Activated CD4-positive, alpha-beta T cell treated with anti-CD3 and anti-CD28 coated beads for 36 hours (primary cell): ENCODE measurements at regions of chr3 and their contacts with region 1.

Region 1: DNA sequence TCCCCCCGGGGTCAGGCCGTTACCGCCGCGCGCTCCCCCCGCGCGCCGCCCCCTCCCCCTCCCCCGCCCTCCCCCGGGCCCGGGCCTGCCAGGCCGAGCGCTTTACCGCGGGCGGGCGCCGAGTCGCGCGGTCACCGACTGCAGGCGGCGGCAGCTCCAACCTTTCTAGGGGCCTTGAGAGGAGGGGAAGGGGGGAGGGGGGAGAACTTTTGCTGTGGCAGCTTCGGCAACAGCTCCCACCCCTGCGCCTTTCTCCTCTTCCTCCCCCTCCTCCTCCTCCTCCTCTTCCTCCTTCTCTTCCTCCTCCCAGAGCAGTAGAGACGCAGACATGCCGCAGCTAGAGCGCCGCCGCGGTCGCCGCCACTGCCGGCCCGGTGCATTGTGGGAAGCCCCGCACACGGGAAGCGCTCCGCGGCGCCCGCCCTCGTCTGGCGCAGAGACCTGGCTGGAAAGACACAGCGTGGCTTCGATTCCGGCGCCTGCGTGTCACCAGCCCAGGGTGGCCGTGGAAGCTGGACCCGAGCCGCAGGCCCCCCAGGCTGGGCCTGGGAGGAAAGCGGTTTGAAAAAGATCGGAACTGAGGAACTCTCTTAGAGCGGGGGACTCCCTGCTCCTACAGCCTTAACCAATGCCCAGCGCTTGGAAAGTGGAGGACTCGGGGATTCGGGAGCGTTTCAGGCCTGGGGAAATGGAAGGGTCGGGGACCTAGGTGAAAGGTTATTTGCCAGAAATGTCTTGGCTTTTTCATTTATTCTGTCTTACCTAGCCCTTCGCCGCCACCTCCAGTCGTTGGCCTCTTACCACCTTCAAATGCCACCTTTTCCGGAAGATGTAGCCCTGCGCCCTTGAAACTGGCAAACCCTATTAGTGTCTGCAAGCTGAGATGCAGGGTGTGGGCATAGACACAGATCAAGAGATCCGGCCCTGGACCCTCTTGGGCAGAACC is at the start of gene ZNF148:
- DNase-seq: peak; percentile 94
- ATAC-seq: peak; percentile 89
- H3K4me3 Mint-ChIP-seq: peak within 1 kb of the TSS; percentile 92
- H3K27ac Mint-ChIP-seq: peak within 1 kb of the TSS; percentile 99
- H3K4me1 Mint-ChIP-seq: peaks cover 36% of the 10 kb centered on the region
- H3K27me3 Mint-ChIP-seq: no peaks in the 10 kb centered on the region
- total RNA-seq, gene ZNF148: 30.3 to 37.7 TPM

Region 2: DNA sequence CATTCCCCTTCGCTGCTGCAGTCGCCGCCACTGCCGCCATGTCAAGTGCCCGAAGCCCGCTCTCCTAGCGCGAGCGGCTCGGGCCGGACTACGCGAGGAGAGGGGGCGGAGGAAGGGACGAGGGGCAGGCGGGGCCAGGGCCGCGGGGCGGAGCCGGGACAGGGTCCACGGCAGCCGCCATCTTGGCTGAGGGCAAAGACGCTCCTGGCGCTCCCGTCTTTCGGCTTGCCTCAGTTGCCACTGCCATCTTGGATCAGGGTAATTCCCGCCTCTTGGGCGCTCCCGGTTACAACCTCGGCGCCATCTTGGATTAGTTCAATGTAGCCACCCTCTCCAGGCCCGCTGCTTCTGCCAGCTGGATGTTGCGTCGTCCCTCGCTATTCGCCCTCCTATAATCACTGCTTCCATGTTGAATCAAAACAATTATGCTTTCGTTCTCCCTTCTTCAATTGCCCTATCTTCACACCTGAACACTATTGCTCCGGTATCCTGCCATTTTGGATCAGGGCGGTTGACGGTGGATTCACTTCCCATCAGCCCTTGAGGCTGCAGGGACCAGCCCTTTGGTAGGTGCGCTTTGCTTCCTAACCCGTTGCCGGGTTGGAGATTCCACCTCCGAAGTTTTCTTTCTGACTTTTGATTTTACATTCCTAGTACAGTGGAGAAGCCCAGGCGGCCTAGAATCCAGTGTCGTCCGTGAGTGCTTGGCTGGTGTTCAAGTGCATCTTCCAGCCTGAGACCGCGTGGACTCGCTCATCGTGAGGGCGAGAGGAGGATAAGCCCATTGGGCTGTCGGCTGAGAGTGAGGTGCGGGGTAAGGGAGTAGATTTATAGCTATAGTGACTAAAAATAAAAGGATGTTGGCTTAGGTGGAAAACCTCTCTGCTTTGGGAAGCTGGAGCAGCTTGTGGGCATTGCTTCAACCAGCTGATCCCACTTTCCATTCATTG is 1790.0 kb before region 1 on chr3 and contains the start of gene HACD2:
- CTCF ChIA-PET with region 1: no interaction called
- POLR2A ChIA-PET with region 1: no interaction called
- intact Hi-C with region 1: loop called in 1 of 2 experiments (anchors 5 kb)
- DNase-seq: peak; percentile 97
- ATAC-seq: peak; percentile 93
- H3K4me3 Mint-ChIP-seq: no peak within 1 kb of the TSS
- H3K27ac Mint-ChIP-seq: peak within 1 kb of the TSS; percentile 87
- H3K4me1 Mint-ChIP-seq: peaks cover 21% of the 10 kb centered on the region
- H3K27me3 Mint-ChIP-seq: no peaks in the 10 kb centered on the region
- total RNA-seq, gene HACD2: 22.1 to 27.7 TPM

Region 3: GRCh38 chr3:125141596-125142419 is 233.5 kb before region 1 on chr3:
- CTCF ChIA-PET with region 1: no interaction called
- POLR2A ChIA-PET with region 1: interaction called, 4 read pairs
- intact Hi-C with region 1: loop called in 1 of 2 experiments (anchors 5 kb)
- DNase-seq: peak; percentile 84
- ATAC-seq: peak; percentile 85
- H3K4me3 Mint-ChIP-seq: peak overlapping the region; percentile 56
- H3K27ac Mint-ChIP-seq: peak overlapping the region; percentile 56
- H3K4me1 Mint-ChIP-seq: peaks cover 28% of the 10 kb centered on the region
- H3K27me3 Mint-ChIP-seq: peaks cover 36% of the 10 kb centered on the region

Region 4: DNA sequence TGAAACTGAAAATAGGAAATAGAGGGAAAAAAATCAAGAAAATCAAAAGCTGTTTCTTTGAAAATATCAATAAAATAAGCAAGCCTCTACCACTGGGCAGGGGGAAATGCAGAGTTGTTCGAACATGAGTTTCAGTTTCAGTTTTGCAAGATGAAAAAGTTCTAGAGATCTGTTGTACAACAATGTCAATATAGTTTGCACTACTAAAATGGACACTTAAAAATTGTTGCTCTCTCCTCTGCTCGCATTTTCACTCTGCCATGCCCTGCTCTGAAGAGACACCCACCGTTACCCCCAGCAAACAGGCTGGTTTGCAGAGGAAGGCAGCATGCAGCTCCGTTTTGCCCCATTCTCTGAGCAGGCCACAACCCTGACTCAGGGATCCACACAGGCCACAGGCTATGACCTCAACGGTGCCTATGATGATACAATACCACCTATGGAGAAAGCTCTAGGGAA is 64.6 kb before region 1 on chr3:
- CTCF ChIA-PET with region 1: no interaction called
- POLR2A ChIA-PET with region 1: no interaction called
- intact Hi-C with region 1: loop called (anchors 2 kb)
- DNase-seq: peak; percentile 73
- ATAC-seq: peak; percentile 89
- H3K4me3 Mint-ChIP-seq: peak overlapping the region; percentile 72
- H3K27ac Mint-ChIP-seq: peak overlapping the region; percentile 86
- H3K4me1 Mint-ChIP-seq: peaks cover 49% of the 10 kb centered on the region
- H3K27me3 Mint-ChIP-seq: no peaks in the 10 kb centered on the region

Region 5: GRCh38 chr3:125437631-125438435 is 62.6 kb after region 1 on chr3:
- CTCF ChIA-PET with region 1: interaction called, 3 read pairs
- POLR2A ChIA-PET with region 1: no interaction called
- intact Hi-C with region 1: loop called in 1 of 2 experiments (anchors 2 kb)
- DNase-seq: peak; percentile 76
- ATAC-seq: peak; percentile 60
- H3K4me3 Mint-ChIP-seq: no peak overlapping the region
- H3K27ac Mint-ChIP-seq: no peak overlapping the region
- H3K4me1 Mint-ChIP-seq: peaks cover 3% of the 10 kb centered on the region
- H3K27me3 Mint-ChIP-seq: no peaks in the 10 kb centered on the region